Testis (tissue), 5 donors: ENCODE measurements at regions of chr17 and their contacts with region 1.

Region 1: DNA sequence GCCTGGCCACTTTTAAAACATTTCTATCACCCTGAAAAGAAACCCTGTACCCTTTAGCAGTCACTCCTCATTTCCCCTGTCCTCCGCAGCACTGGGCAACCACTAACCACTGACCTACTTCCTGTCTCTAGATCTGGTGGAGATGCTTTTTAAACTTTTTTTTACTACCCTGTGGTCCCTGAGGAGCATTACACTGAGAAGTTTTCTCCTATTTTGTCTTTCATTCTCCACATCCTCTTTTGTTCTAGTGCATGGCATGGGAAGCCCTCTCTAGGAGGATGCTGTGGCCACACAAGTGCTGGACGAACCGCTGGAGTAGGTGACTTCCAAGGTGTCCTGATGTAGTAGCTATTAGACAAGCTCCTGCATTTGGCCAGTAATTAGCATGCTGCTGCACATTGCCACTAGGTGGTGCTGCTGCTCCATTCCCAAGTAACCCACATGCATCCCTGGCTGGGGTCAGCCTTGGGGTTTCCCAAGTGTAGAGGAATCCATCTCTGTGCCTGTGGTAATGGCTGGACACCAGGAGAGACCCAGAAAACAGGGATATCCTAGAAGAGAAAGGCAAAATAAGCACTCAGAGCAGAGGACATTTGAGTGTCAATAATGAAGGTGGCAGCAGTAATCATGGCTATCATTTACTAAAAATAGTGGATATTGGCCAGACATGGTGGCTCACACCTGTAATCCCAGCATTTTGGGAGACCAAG is 143.8 kb upstream of the CRHR1 start:
- DNase-seq: peak; percentile 84
- H3K4me3 ChIP-seq: no peak overlapping the region
- H3K27ac ChIP-seq: no peak overlapping the region
- H3K4me1 ChIP-seq: no peaks in the 10 kb centered on the region
- H3K27me3 ChIP-seq: no peaks in the 10 kb centered on the region
- CTCF ChIP-seq: peak; percentile 71 to 92 (median 82)
- POLR2A ChIP-seq: no peak

Region 2: DNA sequence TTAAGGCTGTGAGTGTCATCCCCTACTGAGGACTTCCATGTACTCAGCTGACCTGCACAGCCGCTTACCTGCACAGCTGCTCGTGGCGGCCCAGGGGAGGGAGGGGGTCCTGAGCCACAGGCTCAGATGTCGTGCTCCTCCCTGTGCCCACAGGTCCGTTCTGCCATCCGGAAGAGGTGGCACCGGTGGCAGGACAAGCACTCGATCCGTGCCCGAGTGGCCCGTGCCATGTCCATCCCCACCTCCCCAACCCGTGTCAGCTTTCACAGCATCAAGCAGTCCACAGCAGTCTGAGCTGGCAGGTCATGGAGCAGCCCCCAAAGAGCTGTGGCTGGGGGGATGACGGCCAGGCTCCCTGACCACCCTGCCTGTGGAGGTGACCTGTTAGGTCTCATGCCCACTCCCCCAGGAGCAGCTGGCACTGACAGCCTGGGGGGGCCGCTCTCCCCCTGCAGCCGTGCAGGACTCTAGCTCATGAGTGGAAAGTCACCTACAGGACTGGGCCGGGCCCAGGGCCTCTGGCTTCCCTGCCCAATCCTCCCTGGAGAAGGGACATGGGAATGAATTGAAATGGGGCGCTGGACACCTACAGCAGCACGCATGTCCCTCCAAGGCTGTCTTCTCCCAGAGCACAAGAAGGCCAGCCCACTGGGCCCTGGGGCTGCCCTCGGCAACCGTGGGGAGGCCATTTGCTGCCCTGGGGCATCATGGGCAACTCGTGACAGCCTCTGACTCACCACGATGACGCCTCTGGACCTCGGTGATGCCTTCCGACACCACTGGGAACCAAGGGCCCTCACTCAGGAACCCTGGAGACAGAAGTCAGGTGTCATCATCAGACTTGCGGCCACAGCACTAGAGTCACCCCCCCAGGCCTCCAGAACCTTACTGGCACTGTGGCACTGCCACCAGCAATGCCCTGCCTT is 194.4 kb after region 1 on chr17:
- intact Hi-C with region 1: loop called (anchors 5 kb)
- DNase-seq: no peak
- H3K4me3 ChIP-seq: no peak overlapping the region
- H3K27ac ChIP-seq: no peak overlapping the region
- H3K4me1 ChIP-seq: no peaks in the 10 kb centered on the region
- H3K27me3 ChIP-seq: no peaks in the 10 kb centered on the region
- CTCF ChIP-seq: no peak
- POLR2A ChIP-seq: no peak